PC-3 (cell line): ENCODE measurements at regions of chr14 and their contacts with region 1.

Region 1: DNA sequence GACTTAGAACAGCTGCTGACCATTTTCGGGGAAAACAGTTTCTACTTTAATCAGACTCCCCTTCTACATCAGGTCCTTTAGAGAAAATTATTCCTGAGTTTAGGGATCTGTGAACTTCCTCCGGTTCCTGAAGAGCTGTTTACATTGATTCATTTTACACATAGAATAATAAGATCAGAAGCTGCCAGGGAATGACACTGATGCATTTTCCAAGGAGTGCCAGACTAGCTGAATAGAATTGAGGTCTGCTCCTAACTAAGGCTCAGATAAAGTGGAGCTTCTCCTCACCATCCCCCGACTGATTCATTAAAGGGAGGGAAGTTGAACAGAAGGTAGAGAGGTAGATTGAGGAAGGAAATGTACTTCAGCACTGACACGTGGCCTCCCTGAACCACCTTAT is 41.9 kb upstream of the PSMA6 start:
- DNase-seq: peak; percentile 40
- ATAC-seq: peak; percentile 96
- H3K4me3 ChIP-seq: no peak overlapping the region
- H3K27ac ChIP-seq: 0 out of 2 replicates have a peak overlapping the region, but pooled peaks have one; percentile 11
- H3K4me1 ChIP-seq: peaks cover 14% of the 10 kb centered on the region
- H3K27me3 ChIP-seq: no peaks in the 10 kb centered on the region
- CTCF ChIP-seq: no peak

Region 2: GRCh38 chr14:35016568-35016967 is 233.8 kb before region 1 on chr14:
- CTCF ChIA-PET with region 1: no interaction called
- POLR2A ChIA-PET with region 1: no interaction called
- intact Hi-C with region 1: no loop called
- DNase-seq: no peak
- ATAC-seq: no peak
- H3K4me3 ChIP-seq: no peak overlapping the region
- H3K27ac ChIP-seq: no peak overlapping the region
- H3K4me1 ChIP-seq: no peaks in the 10 kb centered on the region
- H3K27me3 ChIP-seq: no peaks in the 10 kb centered on the region
- CTCF ChIP-seq: no peak

Region 3: GRCh38 chr14:35229495-35230089 is 20.7 kb before region 1 on chr14:
- CTCF ChIA-PET with region 1: interaction called, 3 read pairs
- POLR2A ChIA-PET with region 1: no interaction called
- intact Hi-C with region 1: loop called (anchors 2 kb)
- DNase-seq: peak; percentile 61
- ATAC-seq: peak; percentile 84
- H3K4me3 ChIP-seq: no peak overlapping the region
- H3K27ac ChIP-seq: no peak overlapping the region
- H3K4me1 ChIP-seq: no peaks in the 10 kb centered on the region
- H3K27me3 ChIP-seq: no peaks in the 10 kb centered on the region
- CTCF ChIP-seq: peak; percentile 75

Region 4: GRCh38 chr14:35341446-35342159 is 91.3 kb after region 1 on chr14:
- CTCF ChIA-PET with region 1: no interaction called
- POLR2A ChIA-PET with region 1: no interaction called
- intact Hi-C with region 1: no loop called
- DNase-seq: peak; percentile 88
- ATAC-seq: peak; percentile 99
- H3K4me3 ChIP-seq: no peak overlapping the region
- H3K27ac ChIP-seq: no peak overlapping the region
- H3K4me1 ChIP-seq: peaks cover 22% of the 10 kb centered on the region
- H3K27me3 ChIP-seq: no peaks in the 10 kb centered on the region
- CTCF ChIP-seq: no peak